Gastrocnemius medialis (tissue), 4 donors: ENCODE measurements at regions of chr17 and their contacts with region 1.

Region 1: DNA sequence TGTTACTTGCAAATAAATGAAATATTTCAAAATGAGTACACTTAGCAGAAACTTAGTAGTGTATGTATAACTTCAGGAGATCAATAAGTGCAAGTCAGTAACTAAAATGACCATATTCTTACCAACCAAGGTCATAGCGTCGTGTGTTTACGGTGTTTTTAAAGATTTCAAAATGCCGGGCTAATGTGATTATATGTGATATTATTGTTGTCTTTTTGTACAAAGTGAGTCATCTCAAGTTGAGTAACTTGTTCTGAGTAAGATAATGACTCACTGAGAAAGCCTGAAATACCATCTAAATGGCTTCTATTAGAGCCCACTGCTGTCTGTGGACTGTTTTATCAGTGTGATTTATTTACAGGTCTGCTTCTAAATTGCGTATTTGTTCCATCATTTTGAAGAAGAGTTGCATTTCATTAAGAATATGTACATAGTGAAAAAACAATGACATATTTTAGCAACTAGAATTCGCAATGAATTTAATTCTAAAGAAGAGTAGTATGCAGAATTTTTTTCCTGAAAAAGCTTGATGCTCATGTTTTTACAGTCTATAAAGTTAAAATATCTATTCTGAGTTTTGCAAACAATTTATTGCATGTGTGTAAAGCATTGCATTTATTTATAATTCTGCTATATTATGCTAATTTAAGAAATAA is 12.7 kb downstream of the KRT12 start:
- DNase-seq: no peak
- ATAC-seq: peak; percentile 51 to 63
- H3K4me3 ChIP-seq: no peak overlapping the region
- H3K27ac ChIP-seq: no peak overlapping the region
- H3K4me1 ChIP-seq: peaks cover 4% of the 10 kb centered on the region in 2 donors
- H3K27me3 ChIP-seq: no peaks in the 10 kb centered on the region
- CTCF ChIP-seq: no peak
- POLR2A ChIP-seq: no peak

Region 2: DNA sequence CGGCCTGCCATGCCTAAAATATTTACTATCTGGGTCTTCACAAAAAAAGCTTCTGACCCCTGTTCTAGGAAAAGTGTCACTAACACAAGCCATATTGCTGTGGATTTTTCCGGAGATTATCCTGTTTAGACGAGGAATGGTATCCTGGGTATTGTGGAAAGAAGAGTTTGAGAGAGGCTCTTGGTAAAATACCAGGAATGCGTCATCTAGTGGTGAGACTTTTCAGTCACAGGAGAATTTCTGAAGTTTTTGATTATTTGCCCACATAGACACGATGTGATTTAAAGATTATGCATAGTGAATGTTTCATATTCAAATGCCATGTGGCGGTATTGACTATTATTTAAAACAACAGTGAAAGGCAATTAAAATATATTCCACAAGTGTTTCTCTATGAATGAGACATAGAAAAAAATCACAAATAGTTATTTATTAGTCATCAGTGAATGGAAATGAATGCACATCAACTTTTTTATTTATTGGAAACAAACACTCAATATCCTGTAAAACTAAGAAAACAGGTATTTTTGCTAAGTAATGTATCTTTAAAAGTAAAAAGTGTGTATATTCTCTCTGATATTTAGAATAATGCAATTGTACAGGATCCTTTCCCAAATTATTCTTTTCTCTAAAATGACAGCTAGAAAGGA is 62.4 kb before region 1 on chr17:
- in situ Hi-C with region 1: no loop called
- intact Hi-C with region 1: no loop called
- DNase-seq: no peak
- ATAC-seq: no peak
- H3K4me3 ChIP-seq: no peak overlapping the region
- H3K27ac ChIP-seq: no peak overlapping the region
- H3K4me1 ChIP-seq: no peaks in the 10 kb centered on the region
- H3K27me3 ChIP-seq: peaks cover 3 to 23% (median 7%) of the 10 kb centered on the region in 3 donors
- CTCF ChIP-seq: peak in 4 of 5 experiments; percentile 7 to 47 (median 40)
- POLR2A ChIP-seq: no peak

Region 3: GRCh38 chr17:40963838-40964237 is 109.6 kb after region 1 on chr17:
- in situ Hi-C with region 1: loop called in 1 of 4 experiments (anchors 25 kb)
- intact Hi-C with region 1: no loop called
- DNase-seq: no peak
- ATAC-seq: no peak
- H3K4me3 ChIP-seq: no peak overlapping the region
- H3K27ac ChIP-seq: no peak overlapping the region
- H3K4me1 ChIP-seq: no peaks in the 10 kb centered on the region
- H3K27me3 ChIP-seq: no peaks in the 10 kb centered on the region
- CTCF ChIP-seq: peak in 3 of 5 experiments; percentile 7 to 52 (median 35)
- POLR2A ChIP-seq: no peak

Region 4: DNA sequence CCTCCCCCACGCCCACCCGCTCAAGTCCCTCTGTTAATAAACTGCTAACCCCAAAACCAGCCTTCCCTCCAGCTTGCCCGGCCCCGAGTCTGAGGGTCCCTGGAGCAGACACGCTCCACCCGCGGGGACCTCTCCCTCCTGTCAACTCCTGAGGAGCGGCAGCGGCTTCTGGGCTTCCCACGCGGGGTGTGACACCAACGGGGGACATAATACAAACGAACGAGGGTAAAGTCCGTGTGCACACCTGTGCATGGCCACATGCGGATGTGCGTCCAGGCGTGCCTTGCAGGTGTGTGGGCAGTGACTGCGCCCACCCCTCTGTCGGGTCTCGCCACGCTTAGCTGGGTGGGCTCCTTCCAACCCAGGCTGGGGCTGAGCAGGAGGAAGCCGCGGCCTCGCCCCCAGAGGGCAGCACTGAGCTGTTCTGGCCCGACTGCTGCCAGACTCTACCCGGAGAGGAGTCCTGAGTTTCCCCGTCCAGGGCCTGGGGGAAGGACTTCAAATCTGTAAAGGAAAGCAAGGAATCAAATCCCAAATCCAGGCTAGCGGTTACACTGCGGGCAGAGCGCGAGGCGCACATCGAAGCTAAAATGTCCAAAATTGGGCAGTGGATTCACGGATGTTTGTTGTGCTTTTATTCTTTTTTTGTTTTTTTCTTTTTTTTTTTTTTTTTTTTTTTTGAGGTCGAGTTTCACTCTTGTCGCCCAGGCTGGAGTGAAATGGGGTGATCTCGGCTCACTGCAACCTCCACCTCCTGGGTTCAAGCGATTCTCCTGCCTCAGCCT is 794.3 kb after region 1 on chr17:
- in situ Hi-C with region 1: no loop called
- intact Hi-C with region 1: loop called (anchors 2 kb)
- DNase-seq: peak; percentile 57 to 79
- ATAC-seq: peak; percentile 95 to 96
- H3K4me3 ChIP-seq: peak overlapping the region; percentile 43 to 52 (median 46)
- H3K27ac ChIP-seq: peak overlapping the region in 1 of 4 donors; percentile 30
- H3K4me1 ChIP-seq: peaks cover 7 to 16% of the 10 kb centered on the region in 2 donors
- H3K27me3 ChIP-seq: no peaks in the 10 kb centered on the region
- CTCF ChIP-seq: peak; percentile 82 to 95 (median 91)
- POLR2A ChIP-seq: no peak